ENCODE measurements at regions of chr5 and their contacts with region 1.

Region 1: GRCh38 chr5:151447174-151448037 is at the start of gene SLC36A1:
- DNase-seq: peak; percentile 94
- ATAC-seq: peak; percentile 95
- H3K4me3 Mint-ChIP-seq: peak within 1 kb of the TSS; percentile 87
- H3K27ac Mint-ChIP-seq: peak within 1 kb of the TSS; percentile 89
- H3K4me1 Mint-ChIP-seq: peaks cover 24% of the 10 kb centered on the region
- H3K27me3 Mint-ChIP-seq: peaks cover 19% of the 10 kb centered on the region
- CTCF ChIP-seq: peak; percentile 88
- total RNA-seq, gene SLC36A1: 9.9 and 14.1 TPM in 2 replicates

Region 2: GRCh38 chr5:151417712-151418111 is 29.7 kb before region 1 on chr5:
- CTCF ChIA-PET with region 1: no interaction called
- POLR2A ChIA-PET with region 1: no interaction called
- intact Hi-C with region 1: no loop called
- DNase-seq: no peak
- ATAC-seq: no peak
- H3K4me3 Mint-ChIP-seq: no peak overlapping the region
- H3K27ac Mint-ChIP-seq: no peak overlapping the region
- H3K4me1 Mint-ChIP-seq: no peaks in the 10 kb centered on the region
- H3K27me3 Mint-ChIP-seq: peaks cover 14% of the 10 kb centered on the region
- CTCF ChIP-seq: no peak

Region 3: DNA sequence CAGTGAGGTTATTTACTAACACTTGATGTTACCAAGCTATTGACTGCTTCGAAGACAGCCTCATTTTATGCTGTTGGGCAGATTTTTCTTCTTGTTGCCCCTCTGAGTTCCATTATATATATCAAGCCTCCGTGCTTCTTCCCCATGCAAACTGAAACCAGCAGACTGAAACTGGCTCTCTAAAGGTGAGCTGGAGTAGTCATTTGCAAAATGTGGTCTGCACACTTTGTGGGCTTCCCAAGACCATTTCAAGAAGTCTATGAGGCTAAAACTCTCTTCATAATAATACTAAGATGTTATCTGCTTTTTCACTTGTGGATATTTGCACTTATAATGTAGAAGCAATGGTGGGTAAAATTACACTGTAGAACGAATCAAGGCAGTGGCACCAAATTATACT is 13.9 kb after region 1 on chr5:
- CTCF ChIA-PET with region 1: interaction called, 6 read pairs
- POLR2A ChIA-PET with region 1: interaction called, 11 read pairs
- intact Hi-C with region 1: no loop called
- DNase-seq: no peak
- ATAC-seq: no peak
- H3K4me3 Mint-ChIP-seq: no peak overlapping the region
- H3K27ac Mint-ChIP-seq: no peak overlapping the region
- H3K4me1 Mint-ChIP-seq: no peaks in the 10 kb centered on the region
- H3K27me3 Mint-ChIP-seq: no peaks in the 10 kb centered on the region
- CTCF ChIP-seq: no peak

Region 4: GRCh38 chr5:151523335-151523734 is 75.9 kb after region 1 on chr5:
- CTCF ChIA-PET with region 1: interaction called, 8 read pairs
- POLR2A ChIA-PET with region 1: no interaction called
- intact Hi-C with region 1: loop called (anchors 1 kb)
- DNase-seq: no peak
- ATAC-seq: peak; percentile 79
- H3K4me3 Mint-ChIP-seq: no peak overlapping the region
- H3K27ac Mint-ChIP-seq: no peak overlapping the region
- H3K4me1 Mint-ChIP-seq: no peaks in the 10 kb centered on the region
- H3K27me3 Mint-ChIP-seq: peaks cover 2% of the 10 kb centered on the region
- CTCF ChIP-seq: no peak

Region 5: GRCh38 chr5:151740336-151740942 is 293.0 kb after region 1 on chr5:
- CTCF ChIA-PET with region 1: no interaction called
- POLR2A ChIA-PET with region 1: no interaction called
- intact Hi-C with region 1: loop called (anchors 1 kb)
- DNase-seq: no peak
- ATAC-seq: peak; percentile 69
- H3K4me3 Mint-ChIP-seq: no peak overlapping the region
- H3K27ac Mint-ChIP-seq: no peak overlapping the region
- H3K4me1 Mint-ChIP-seq: peaks cover 16% of the 10 kb centered on the region
- H3K27me3 Mint-ChIP-seq: no peaks in the 10 kb centered on the region
- CTCF ChIP-seq: peak; percentile 68